ENCODE measurements at regions of chr22 and their contacts with region 1.

Region 1: GRCh38 chr22:19607192-19608002 is 83.2 kb upstream of the CLDN5 start:
- DNase-seq: peak; percentile 81
- H3K4me3 Mint-ChIP-seq: peak overlapping the region; percentile 32
- H3K27ac Mint-ChIP-seq: peak overlapping the region; percentile 54
- H3K4me1 Mint-ChIP-seq: peaks cover 56% of the 10 kb centered on the region
- H3K27me3 Mint-ChIP-seq: no peaks in the 10 kb centered on the region

Region 2: GRCh38 chr22:19576460-19577421 is 30.7 kb before region 1 on chr22:
- CTCF ChIA-PET with region 1: interaction called, 3 read pairs
- POLR2A ChIA-PET with region 1: no interaction called
- intact Hi-C with region 1: loop called (anchors 1 kb)
- DNase-seq: peak; percentile 88
- H3K4me3 Mint-ChIP-seq: peak overlapping the region; percentile 11
- H3K27ac Mint-ChIP-seq: peak overlapping the region; percentile 83
- H3K4me1 Mint-ChIP-seq: peaks cover 45% of the 10 kb centered on the region
- H3K27me3 Mint-ChIP-seq: no peaks in the 10 kb centered on the region

Region 3: GRCh38 chr22:19597399-19597735 is 10.0 kb before region 1 on chr22:
- CTCF ChIA-PET with region 1: no interaction called
- POLR2A ChIA-PET with region 1: no interaction called
- intact Hi-C with region 1: loop called (anchors 1 kb)
- DNase-seq: peak; percentile 45
- H3K4me3 Mint-ChIP-seq: no peak overlapping the region
- H3K27ac Mint-ChIP-seq: peak overlapping the region; percentile 72
- H3K4me1 Mint-ChIP-seq: peaks cover 34% of the 10 kb centered on the region
- H3K27me3 Mint-ChIP-seq: no peaks in the 10 kb centered on the region

Region 4: GRCh38 chr22:19644314-19645223 is 37.2 kb after region 1 on chr22:
- CTCF ChIA-PET with region 1: no interaction called
- POLR2A ChIA-PET with region 1: no interaction called
- intact Hi-C with region 1: no loop called
- DNase-seq: no peak
- H3K4me3 Mint-ChIP-seq: no peak overlapping the region
- H3K27ac Mint-ChIP-seq: no peak overlapping the region
- H3K4me1 Mint-ChIP-seq: no peaks in the 10 kb centered on the region
- H3K27me3 Mint-ChIP-seq: peaks cover 26% of the 10 kb centered on the region